ENCODE measurements at regions of chr20 and their contacts with region 1.

Region 1: DNA sequence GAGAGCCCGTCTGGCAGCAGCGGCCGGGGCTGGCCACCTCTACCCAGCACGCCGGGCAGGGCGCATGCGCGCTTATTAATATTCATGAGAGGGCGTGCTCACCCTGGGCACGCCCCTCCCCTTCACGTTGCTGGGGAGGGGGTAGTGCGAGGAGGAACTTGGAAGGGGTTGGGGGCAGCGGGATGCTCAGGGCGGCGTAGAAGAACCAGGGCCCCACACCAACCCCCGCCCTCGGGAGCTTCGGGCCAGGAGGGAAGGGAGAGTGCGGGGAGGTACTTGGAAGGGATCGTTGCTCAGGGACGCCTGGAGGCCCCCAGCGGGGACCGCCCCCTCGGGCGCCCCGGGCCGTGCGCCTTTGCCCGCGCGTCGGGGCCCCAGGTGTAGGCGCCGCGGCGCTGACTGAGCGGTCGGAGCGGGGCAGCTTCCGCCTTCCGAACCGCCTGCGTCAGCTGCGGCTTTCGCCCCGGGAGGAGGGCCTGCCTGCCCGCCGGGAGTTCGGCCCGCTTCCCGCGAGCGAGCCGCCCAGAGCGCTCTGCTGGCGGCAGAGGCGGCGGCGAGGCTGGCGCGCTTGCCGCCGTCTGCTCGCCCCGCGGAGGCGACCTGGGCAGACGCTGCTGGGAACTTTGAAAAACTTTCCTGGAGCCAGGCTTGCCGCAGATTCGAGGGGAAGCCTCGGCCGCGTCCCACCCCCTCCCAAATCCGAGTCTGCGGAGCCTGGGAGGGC is at the start of gene JAG1:
- DNase-seq: peak; percentile 97 to 99
- ATAC-seq: peak; percentile 73 to 76
- H3K4me3 ChIP-seq: peak within 1 kb of the TSS; percentile 92
- H3K27ac ChIP-seq: peak within 1 kb of the TSS; percentile 95 to 97
- H3K4me1 ChIP-seq: peaks cover 33% of the 10 kb centered on the region
- CTCF ChIP-seq: no peak
- EP300 ChIP-seq: peak in 1 of 2 experiments; percentile 10; a peak in 2 of 5 replicates
- POLR2A ChIP-seq: peak; percentile 42; the same call in 1 of the 2 replicates
- RAD21 ChIP-seq: peak in 1 of 2 experiments; percentile 14; a peak in 1 of 5 replicates
- polyA plus RNA-seq, gene JAG1: 90.0 and 141 TPM in 2 replicates

Region 2: DNA sequence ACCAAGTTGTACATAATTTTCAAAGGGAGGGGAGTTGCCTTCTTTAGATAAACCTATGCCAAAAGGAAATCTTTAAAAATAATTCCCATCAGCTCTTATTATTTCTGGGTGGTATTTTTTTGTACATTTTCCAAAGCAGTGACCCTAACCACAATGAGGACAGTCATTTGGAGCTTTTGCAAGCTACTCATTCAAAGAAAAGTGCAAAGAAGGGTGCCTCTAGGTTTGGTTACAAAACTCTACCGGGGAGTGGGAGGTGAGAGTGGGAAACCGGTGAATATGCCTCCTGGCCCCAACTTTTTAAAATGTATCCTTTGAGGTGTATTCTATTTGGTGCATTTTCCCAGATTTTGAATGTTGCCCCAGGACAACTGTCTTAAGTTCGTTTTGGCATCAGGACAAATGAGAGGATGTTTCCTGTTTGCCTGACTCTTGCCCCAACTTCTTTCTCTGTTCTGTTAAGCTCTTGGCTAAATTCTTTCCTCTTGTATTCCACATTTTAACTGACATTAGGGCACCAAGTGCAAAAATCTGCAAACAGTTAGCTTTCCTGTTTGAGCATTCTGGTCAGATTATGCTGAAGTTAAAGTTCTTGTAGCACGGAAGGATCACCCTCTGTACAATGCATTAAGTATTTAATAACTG is 160.1 kb before region 1 on chr20:
- CTCF ChIA-PET with region 1: no interaction called
- POLR2A ChIA-PET with region 1: no interaction called
- DNase-seq: no peak
- ATAC-seq: no peak
- H3K4me3 ChIP-seq: no peak overlapping the region
- H3K27ac ChIP-seq: peak overlapping the region; percentile 54 to 77
- H3K4me1 ChIP-seq: peaks cover 48% of the 10 kb centered on the region
- CTCF ChIP-seq: no peak
- EP300 ChIP-seq: no peak
- POLR2A ChIP-seq: no peak
- RAD21 ChIP-seq: no peak

Region 3: DNA sequence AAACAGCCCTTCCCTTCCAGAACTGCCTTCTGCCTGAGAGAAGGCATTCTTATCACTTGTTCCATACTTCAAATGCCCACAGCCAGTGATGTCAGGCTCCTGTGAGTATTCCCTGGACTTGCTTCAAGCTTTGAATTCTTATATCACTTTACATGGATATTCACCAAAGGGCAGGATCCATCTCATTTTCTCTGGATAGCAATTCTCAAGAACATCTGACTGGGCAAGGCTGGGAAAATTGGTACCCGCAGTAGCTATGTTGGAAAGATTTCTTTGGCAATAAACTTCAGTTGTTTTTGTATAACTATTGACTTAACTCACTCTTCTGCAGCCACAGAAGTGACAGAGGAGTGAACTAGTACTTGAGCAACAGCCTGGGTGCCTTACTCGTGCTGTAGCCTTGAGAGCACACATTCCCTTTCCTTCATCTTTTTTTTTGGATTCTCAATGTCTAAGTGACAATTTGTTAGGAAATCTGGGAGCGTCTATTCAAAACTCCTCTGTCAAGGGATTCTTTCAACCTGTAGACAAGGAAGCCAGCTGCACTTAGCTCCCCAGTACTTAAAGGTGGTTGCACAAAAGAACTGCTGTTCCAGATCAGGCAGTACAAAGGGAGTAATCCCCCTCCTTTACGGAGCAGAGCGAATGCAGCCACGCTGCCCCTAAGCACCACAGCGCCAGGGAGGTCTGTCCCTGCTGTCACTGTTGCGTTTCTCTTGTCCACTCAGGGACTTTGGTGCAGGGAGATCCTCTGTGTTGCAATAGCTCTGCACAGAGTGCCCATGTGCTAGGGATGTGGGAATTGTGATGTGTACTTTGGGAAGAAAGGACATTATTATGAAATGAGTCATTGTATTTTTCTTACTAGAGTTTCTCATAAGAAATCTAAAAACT is 69.9 kb before region 1 on chr20:
- CTCF ChIA-PET with region 1: interaction called, 10 read pairs
- POLR2A ChIA-PET with region 1: interaction called, 5 read pairs
- DNase-seq: peak; percentile 85 to 86
- ATAC-seq: peak; percentile 94 to 95
- H3K4me3 ChIP-seq: no peak overlapping the region
- H3K27ac ChIP-seq: peak overlapping the region; percentile 65 to 79
- H3K4me1 ChIP-seq: peaks cover 37% of the 10 kb centered on the region
- CTCF ChIP-seq: no peak
- EP300 ChIP-seq: peak in 1 of 2 experiments; percentile 47; a peak in 2 of 5 replicates
- POLR2A ChIP-seq: no peak
- RAD21 ChIP-seq: peak; percentile 34 to 35; a peak in 2 of 5 replicates

Region 4: DNA sequence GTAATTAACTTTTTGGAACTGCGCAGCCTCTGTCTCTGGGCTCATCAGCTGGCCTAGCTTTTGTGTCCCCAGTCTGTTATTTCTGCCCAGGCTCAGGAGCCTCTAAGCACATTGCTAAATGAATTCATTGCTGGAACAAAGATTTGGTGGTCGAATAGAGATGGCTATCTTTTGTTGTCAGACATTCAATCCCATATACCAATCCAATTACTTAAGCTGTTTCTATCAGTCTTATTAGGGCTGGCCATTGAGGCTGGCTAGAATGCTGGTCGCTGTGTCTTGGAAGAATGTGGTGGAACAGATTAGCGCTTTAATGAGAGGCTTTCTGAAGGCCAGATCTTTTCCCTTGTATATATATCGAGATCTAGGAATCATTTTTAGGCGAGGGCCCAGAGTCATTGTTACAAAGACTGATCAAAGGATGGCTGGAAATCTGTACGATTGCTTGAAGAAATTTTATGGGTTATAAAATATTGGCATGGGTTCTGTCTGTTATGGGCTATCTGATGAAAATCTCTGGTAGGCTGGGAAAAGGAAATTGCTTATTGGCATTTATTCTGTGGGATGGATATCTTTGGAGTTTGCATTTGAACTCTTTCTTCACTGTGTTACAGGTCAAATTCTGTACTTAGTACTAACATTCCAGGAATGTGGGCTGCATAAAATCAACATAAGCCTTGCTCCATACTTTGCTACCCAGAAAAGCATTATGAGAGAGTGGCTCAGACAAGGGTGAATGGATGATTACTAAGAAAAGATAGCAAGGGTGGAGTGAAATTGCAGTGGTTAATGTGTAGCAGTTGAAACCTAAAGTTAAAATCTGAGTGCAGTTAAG is 34.4 kb after region 1 on chr20:
- CTCF ChIA-PET with region 1: interaction called, 31 read pairs
- POLR2A ChIA-PET with region 1: interaction called, 14 read pairs
- DNase-seq: peak; percentile 39 to 86
- ATAC-seq: peak; percentile 54 to 79; a peak in 4 of 6 replicates
- H3K4me3 ChIP-seq: no peak overlapping the region
- H3K27ac ChIP-seq: peak overlapping the region; percentile 86 to 91
- H3K4me1 ChIP-seq: peaks cover 80% of the 10 kb centered on the region
- CTCF ChIP-seq: no peak
- EP300 ChIP-seq: peak; percentile 81 to 92; a peak in 3 of 5 replicates
- POLR2A ChIP-seq: no peak
- RAD21 ChIP-seq: peak; percentile 34 to 51; a peak in 3 of 5 replicates

Region 5: GRCh38 chr20:10857352-10858070 is 183.4 kb after region 1 on chr20:
- CTCF ChIA-PET with region 1: interaction called, 10 read pairs
- POLR2A ChIA-PET with region 1: interaction called, 22 read pairs
- DNase-seq: peak; percentile 74 to 97
- ATAC-seq: peak; percentile 82 to 84
- H3K4me3 ChIP-seq: no peak overlapping the region
- H3K27ac ChIP-seq: peak overlapping the region; percentile 82 to 89
- H3K4me1 ChIP-seq: peaks cover 72% of the 10 kb centered on the region
- CTCF ChIP-seq: no peak
- EP300 ChIP-seq: peak; percentile 73 to 87; a peak in 4 of 5 replicates
- POLR2A ChIP-seq: no peak
- RAD21 ChIP-seq: peak; percentile 24 to 55; a peak in 4 of 5 replicates

Region 6: DNA sequence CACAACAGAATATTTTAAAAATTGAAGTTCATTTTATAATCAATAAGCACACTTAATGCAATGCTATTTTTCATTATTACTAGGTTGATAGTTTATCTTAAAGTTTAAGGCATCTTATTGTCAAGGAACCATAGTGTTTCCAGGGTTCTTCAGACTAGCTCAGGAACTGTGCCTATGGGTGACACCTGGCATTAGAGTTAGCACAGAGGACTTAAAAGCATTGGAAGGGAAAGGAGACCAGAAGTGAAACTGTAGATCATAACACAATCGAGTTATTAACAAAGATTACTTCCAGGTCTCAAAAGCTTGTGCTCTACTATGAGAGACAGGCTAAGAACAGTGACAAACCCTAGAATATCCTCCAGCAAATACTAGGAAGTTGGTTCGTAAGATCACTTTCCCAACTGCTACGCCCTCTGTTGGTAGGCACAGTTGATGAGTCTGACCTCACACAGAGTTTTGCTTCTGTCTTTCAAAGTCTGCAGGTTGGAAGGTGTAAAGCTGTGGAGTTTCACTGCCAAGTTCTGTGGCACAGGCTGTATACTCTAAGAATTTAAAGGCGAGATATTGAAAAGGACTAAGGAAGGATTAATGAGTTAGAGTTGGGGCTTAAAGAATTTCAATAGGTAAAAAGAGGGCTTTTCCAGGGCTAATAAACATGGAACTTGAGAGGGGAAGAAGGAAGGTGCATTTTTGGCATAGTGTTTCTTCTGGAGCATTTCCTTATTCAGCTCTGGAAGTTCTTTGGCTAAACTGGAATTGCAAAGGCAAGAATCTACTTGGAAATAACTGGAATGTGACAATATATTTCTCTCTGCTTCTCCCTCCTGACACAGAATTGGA is 531.0 kb after region 1 on chr20:
- CTCF ChIA-PET with region 1: interaction called, 37 read pairs
- POLR2A ChIA-PET with region 1: interaction called, 79 read pairs
- DNase-seq: peak; percentile 53 to 89
- ATAC-seq: peak; percentile 62 to 76
- H3K4me3 ChIP-seq: no peak overlapping the region
- H3K27ac ChIP-seq: peak overlapping the region; percentile 82 to 87
- H3K4me1 ChIP-seq: peaks cover 61% of the 10 kb centered on the region
- CTCF ChIP-seq: peak; percentile 89
- EP300 ChIP-seq: no peak
- POLR2A ChIP-seq: no peak
- RAD21 ChIP-seq: peak; percentile 84 to 91

Region 7: DNA sequence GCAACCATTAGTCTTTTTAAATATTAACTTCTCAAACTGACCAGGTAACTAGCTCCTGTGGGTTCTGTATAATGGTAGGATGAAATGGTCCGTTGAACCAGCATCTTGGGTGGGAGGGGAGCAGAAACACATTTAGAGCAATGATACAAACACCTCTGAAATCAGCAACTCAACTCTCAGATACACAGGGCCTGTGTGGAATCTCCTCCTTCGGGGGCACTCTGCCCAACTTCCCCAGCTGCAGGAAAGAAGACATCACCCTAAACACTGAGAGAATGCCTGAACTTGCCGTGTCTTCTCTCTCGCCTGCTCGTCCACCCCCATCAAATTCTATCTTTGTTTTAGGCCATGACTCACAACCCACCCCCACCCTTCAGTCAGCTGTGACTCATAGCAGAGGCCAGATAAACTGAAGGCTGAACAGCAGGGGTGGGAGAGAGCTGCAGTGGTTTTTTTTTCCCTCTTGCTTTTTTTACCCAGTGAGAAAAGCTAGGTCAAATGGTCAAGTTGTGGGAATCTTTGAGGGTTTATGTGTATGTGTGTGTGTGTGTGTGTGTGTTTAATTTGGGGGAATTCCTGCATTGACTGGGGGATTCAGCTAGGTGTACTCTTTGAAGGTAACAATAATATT is 593.1 kb after region 1 on chr20:
- CTCF ChIA-PET with region 1: interaction called, 20 read pairs
- POLR2A ChIA-PET with region 1: interaction called, 25 read pairs
- DNase-seq: peak; percentile 93 to 97
- ATAC-seq: peak; percentile 93 to 97
- H3K4me3 ChIP-seq: no peak overlapping the region
- H3K27ac ChIP-seq: peak overlapping the region; percentile 75 to 87
- H3K4me1 ChIP-seq: peaks cover 43% of the 10 kb centered on the region
- CTCF ChIP-seq: no peak; the same call in 2 of the 3 replicates
- EP300 ChIP-seq: peak; percentile 86 to 87; a peak in 4 of 5 replicates
- POLR2A ChIP-seq: no peak
- RAD21 ChIP-seq: peak; percentile 60 to 82